BJ (cell line): ENCODE measurements at regions of chr19 and their contacts with region 1.

Region 1: DNA sequence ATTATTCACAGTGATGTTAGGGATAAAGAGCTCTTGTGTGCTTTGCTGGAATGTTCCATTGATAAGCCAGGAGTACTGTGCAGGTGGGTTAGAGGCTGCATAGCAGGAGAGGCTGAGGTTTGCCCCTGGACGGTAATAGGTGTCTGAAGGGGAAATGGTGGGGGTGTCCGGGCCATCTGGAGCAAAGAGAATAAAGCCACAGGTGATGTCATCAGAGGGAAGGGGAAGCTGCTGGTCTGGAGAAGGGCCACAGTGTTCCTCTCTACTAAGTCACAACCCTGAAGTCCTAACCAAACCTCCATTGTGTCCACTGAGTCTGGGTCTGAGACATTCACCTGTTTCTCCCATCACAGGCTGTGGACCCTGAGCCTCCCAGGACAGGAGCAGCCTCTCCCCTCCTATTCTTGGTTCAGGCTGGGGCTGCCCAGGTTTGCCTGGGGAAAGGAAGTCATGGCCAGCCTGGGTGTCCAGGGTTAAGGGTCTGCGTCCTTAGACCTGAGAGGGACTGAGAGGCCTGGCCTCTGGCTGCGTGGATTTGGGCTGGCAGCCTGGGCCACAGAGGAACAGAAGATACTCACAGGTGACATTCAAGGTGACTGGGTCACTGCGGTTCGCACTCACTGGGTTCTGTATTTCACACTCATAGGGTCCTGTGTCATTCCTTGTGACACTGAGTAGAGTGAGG is 6.8 kb downstream of the CEACAM1 start:
- DNase-seq: no peak
- H3K4me3 ChIP-seq: no peak overlapping the region
- H3K27me3 ChIP-seq: peaks cover 9% of the 10 kb centered on the region
- CTCF ChIP-seq: no peak

Region 2: GRCh38 chr19:42268704-42269477 is 252.6 kb before region 1 on chr19 and contains the start of gene CIC:
- CTCF ChIA-PET with region 1: no interaction called
- POLR2A ChIA-PET with region 1: interaction called, 11 read pairs
- DNase-seq: peak; percentile 100
- H3K4me3 ChIP-seq: peak within 1 kb of the TSS; percentile 87
- H3K27me3 ChIP-seq: no peaks in the 10 kb centered on the region
- CTCF ChIP-seq: no peak
- polyA plus RNA-seq, gene CIC: 3.5 and 7.0 TPM in 2 replicates

Region 3: GRCh38 chr19:42423462-42424344 is 97.8 kb before region 1 on chr19:
- CTCF ChIA-PET with region 1: no interaction called
- POLR2A ChIA-PET with region 1: no interaction called
- DNase-seq: peak; percentile 54
- H3K4me3 ChIP-seq: peak overlapping the region; percentile 62
- H3K27me3 ChIP-seq: no peaks in the 10 kb centered on the region
- CTCF ChIP-seq: no peak